ENCODE measurements at regions of chr11 and their contacts with region 1.

Region 1: DNA sequence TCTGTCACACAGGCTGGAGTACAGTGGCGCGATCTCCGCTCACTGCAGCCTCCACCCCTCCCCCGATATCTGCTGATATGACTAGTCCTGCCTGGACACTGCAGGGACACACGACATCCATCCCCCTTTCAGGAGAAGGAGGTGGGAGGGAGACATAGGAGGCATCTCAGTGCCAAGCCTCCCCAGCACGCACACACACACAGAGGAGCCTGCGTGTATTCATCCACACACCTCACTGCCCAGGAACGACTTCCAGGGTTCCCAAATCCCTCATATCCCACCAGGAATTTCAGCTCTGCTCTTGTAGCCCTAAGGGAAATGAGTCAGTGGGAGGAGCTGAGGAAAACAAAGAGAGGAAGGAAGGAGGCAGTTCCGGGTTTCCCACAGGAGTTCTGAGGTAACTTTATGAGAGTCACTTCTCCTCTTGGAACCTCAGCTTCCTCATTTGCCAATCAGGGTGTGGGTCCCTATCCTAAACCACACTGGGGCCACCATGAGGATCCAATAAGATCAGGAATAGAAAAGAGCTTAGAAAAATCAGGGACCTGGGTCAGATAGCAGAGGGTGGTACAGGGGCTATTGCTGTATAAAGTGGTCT is 37.1 kb upstream of the ACER3 start:
- DNase-seq: peak; percentile 89 to 91
- ATAC-seq: peak; percentile 95 to 97
- H3K4me3 ChIP-seq: peak overlapping the region; percentile 37
- H3K27ac ChIP-seq: peak overlapping the region; percentile 80 to 91
- H3K4me1 ChIP-seq: peaks cover 27% of the 10 kb centered on the region
- CTCF ChIP-seq: no peak
- EP300 ChIP-seq: no peak
- POLR2A ChIP-seq: no peak; the same call in 1 of the 2 replicates
- RAD21 ChIP-seq: no peak

Region 2: DNA sequence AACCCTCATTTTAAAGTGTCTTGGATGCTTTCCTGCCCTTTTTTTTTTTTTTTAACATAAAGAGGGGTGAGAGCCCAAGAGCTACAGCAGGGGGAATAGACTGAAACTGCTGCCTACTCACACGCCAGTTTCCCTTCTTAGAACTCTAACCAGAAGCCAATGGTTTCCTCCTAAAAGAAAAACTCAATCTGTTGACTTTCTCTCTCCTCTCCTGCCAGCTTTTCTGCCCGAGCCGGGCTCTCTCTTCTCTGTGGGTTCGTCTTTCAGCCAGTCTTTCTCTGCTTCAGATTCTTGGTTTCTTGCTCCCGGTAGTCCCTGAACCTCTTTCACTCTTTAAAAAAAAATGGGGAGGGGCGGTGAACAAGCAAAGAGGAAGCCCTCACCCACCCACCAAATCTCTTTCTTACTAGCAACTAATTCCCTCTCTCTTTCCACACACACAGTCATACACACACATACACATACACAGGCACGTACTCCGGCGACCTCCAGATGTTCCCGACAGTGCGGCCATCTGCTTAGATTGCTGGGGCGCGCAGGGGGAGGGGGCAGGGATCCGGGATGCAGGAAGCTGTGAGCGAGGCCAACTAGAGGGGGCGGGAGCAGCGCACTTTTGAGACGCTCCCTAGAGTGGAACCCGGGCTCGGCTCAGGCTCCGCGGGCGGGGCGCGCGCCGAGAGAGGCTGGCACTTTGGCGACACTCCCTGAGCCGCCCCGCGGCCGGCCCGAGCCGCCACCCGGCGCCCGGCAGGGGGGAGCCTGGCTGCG is 40.9 kb before region 1 on chr11:
- CTCF ChIA-PET with region 1: no interaction called
- POLR2A ChIA-PET with region 1: no interaction called
- DNase-seq: peak; percentile 87 to 95
- ATAC-seq: peak; percentile 66 to 71
- H3K4me3 ChIP-seq: peak overlapping the region; percentile 71
- H3K27ac ChIP-seq: peak overlapping the region; percentile 96 to 98
- H3K4me1 ChIP-seq: peaks cover 36% of the 10 kb centered on the region
- CTCF ChIP-seq: no peak
- EP300 ChIP-seq: peak; percentile 15 to 46; a peak in 3 of 5 replicates
- POLR2A ChIP-seq: peak; percentile 57
- RAD21 ChIP-seq: peak; percentile 2 to 34; a peak in 1 of 5 replicates

Region 3: GRCh38 chr11:76835928-76836612 is 12.5 kb after region 1 on chr11:
- CTCF ChIA-PET with region 1: interaction called, 10 read pairs
- POLR2A ChIA-PET with region 1: no interaction called
- DNase-seq: peak in 1 of 2 experiments; percentile 64
- ATAC-seq: peak; percentile 9 to 73; a peak in 3 of 6 replicates
- H3K4me3 ChIP-seq: no peak overlapping the region
- H3K27ac ChIP-seq: peak overlapping the region; percentile 14 to 39; a peak in 2 of 6 replicates
- H3K4me1 ChIP-seq: peaks cover 39% of the 10 kb centered on the region
- CTCF ChIP-seq: no peak
- EP300 ChIP-seq: no peak
- POLR2A ChIP-seq: no peak
- RAD21 ChIP-seq: no peak